ENCODE measurements at regions of chr11 and their contacts with region 1.

Region 1: DNA sequence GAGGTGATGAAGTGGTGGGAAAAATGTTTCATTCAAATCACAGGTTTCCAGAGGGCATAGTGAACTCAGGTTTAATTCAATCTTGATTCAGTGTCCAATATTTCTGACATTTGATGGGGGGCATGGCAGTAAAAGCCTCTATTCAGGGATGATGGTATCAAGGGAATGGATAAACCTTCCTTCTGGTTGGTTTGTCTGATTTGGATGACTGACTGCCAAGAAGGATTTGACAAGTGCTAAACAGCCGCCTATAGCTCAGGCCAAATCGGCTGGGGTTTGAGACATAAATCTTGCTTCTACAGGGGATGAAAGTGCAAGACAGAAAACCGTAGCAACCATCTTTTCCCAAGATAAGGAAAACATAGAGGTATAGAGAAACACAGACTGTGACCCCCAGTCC is 121.8 kb upstream of the C11orf87 start:
- DNase-seq: no peak
- H3K4me3 ChIP-seq: no peak overlapping the region
- H3K27ac ChIP-seq: no peak overlapping the region
- H3K4me1 ChIP-seq: peaks cover 14% of the 10 kb centered on the region
- H3K27me3 ChIP-seq: no peaks in the 10 kb centered on the region
- CTCF ChIP-seq: no peak

Region 2: GRCh38 chr11:109349276-109350080 is 49.3 kb after region 1 on chr11:
- intact Hi-C with region 1: loop called (anchors 2 kb)
- DNase-seq: no peak
- H3K4me3 ChIP-seq: no peak overlapping the region
- H3K27ac ChIP-seq: no peak overlapping the region
- H3K4me1 ChIP-seq: no peaks in the 10 kb centered on the region
- H3K27me3 ChIP-seq: no peaks in the 10 kb centered on the region
- CTCF ChIP-seq: no peak

Region 3: DNA sequence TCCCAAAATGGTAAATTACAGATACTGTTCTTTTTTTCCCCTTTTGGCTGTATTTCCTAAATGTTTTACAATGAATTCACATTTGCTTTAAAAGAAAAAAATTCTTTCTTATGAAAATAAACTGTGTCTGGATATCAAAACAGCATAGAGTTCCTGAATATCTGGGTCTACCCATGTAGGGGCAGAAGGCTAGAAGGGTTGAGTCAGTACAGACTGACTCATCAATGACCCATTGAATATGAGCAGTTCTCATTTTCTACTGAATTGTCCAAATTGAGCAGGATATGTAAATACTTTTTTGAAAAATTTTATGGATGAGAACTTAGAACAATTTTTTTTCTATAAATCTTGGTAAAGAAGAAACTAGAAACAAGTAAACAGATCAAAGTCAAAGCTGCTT is 105.5 kb after region 1 on chr11:
- intact Hi-C with region 1: no loop called
- DNase-seq: no peak
- H3K4me3 ChIP-seq: no peak overlapping the region
- H3K27ac ChIP-seq: no peak overlapping the region
- H3K4me1 ChIP-seq: no peaks in the 10 kb centered on the region
- H3K27me3 ChIP-seq: no peaks in the 10 kb centered on the region
- CTCF ChIP-seq: no peak

Region 4: GRCh38 chr11:109547356-109548027 is 247.3 kb after region 1 on chr11:
- intact Hi-C with region 1: no loop called
- DNase-seq: no peak
- H3K4me3 ChIP-seq: no peak overlapping the region
- H3K27ac ChIP-seq: no peak overlapping the region
- H3K4me1 ChIP-seq: no peaks in the 10 kb centered on the region
- H3K27me3 ChIP-seq: no peaks in the 10 kb centered on the region
- CTCF ChIP-seq: no peak